Activated CD4-positive, alpha-beta memory T cell treated with anti-CD3 and anti-CD28 coated beads, Interleukin-2, amount 10 ng/mL, durations not matched to agents 7 days and 5 days (primary cell): ENCODE measurements at regions of chr3 and their contacts with region 1.

Region 1: GRCh38 chr3:66971891-66972551 is 26.1 kb upstream of the KBTBD8 start:
- DNase-seq: peak; percentile 68
- H3K4me3 Mint-ChIP-seq: peak overlapping the region; percentile 64
- H3K27ac Mint-ChIP-seq: peak overlapping the region; percentile 27
- H3K4me1 Mint-ChIP-seq: peaks cover 18% of the 10 kb centered on the region
- H3K27me3 Mint-ChIP-seq: peaks cover 2% of the 10 kb centered on the region

Region 2: DNA sequence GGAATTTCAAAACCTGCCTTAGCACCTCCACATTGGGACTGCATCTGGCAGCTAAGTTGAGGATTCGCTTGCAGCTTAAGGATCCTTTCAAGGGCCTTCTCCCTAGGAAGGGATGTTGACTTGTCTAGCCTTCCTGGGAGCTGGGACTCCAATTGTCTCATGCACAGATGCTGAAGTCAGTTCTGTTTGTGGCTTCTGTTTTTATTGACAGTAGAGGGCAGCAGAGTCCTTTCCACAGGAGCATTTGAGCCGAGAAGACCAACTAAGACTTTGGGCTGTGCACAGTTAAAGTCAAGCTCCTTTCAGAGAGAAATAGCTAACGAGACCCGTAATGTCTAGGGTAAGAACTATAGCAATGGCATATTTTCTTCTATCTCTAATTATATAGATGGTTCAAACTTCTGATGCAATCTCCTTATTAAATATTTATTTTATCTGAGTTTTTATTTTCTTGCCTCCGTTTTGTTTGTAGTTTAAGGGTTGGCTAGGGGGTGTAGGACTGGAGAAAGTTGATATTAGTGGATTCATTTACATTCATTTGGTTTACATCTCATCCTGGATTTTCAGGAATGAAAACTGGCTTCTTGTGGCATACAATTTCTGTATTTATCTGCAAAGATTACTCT is 33.6 kb before region 1 on chr3:
- CTCF ChIA-PET with region 1: interaction called, 14 read pairs
- POLR2A ChIA-PET with region 1: no interaction called
- DNase-seq: peak; percentile 26
- H3K4me3 Mint-ChIP-seq: no peak overlapping the region
- H3K27ac Mint-ChIP-seq: no peak overlapping the region
- H3K4me1 Mint-ChIP-seq: no peaks in the 10 kb centered on the region
- H3K27me3 Mint-ChIP-seq: peaks cover 10% of the 10 kb centered on the region

Region 3: DNA sequence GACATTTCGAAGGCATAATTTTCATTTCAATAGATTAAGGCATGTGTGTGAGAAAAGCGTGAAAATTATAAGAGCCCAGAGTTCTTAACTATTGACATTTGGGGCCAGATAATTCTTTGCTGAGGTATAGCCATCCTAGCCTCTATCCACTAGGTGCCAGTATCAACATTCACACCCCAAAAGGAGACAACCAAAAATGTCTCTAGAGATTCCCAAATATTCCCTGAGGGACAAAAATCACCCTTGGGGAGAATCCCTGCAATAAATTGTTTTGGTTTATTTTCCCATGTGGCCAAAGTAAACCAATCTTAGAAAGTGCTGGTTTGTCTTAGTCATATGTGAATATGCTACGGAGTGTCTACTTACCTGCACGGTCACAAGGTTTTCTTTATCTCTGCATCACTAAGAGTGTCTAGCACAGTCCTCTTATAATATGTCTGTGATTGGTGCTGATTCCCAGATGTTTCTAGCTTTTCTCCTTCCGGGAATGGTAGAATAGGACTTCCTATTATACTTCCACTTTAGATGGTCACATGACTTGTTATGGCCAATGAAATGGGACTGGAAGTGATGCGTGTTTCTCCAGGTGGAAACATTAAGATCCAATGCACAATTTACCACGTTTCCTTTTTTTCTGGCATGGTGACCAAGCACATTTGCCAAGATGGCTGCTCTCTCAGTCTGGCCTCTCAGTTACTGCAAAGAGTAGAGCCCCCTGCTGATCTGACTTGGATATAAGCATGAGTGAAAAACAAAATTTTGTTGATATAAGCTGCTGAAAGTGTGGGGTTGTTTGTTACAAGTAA is 18.0 kb after region 1 on chr3:
- CTCF ChIA-PET with region 1: interaction called, 52 read pairs
- POLR2A ChIA-PET with region 1: interaction called, 3 read pairs
- DNase-seq: no peak
- H3K4me3 Mint-ChIP-seq: no peak overlapping the region
- H3K27ac Mint-ChIP-seq: no peak overlapping the region
- H3K4me1 Mint-ChIP-seq: no peaks in the 10 kb centered on the region
- H3K27me3 Mint-ChIP-seq: peaks cover 16% of the 10 kb centered on the region

Region 4: DNA sequence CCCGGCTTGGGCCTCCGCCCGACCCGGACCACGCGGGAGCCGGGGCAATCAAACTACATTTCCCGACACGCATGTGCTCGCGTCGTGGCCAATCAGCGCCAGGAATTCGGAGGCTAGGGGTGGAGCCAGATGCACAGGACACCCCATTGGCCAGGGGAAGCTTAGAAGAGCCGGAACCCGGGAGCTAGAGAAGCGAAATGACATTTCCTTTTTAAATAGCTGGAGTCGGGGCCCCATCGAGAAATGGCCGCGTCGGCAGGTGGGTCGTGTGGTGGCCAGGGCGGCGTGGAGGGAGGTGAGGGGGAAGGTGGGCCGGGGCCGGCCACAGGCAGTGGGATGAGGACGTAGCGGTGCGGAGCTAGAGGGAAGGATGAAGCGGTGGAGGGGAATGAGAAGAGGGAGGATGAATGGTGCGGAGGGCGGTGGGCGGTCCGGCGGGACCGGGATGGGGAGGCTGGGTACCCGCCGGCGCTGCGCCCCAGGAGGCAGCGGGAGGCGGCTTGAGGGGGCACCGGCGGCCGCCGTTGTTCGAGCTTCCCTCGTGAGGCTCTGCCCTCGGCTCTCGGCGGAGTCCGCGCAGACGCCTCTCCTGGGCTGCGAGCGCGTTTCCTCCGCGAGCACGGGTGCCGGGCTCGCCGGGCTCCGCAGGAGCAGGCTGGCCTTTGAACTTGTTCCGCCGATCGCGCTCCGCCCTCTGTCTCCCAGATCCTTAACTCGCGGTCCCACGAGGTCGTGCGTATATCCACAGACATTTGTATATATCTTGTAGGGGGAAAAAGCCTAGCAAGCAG is 26.3 kb after region 1 on chr3 and contains the start of gene KBTBD8:
- CTCF ChIA-PET with region 1: interaction called, 47 read pairs
- POLR2A ChIA-PET with region 1: interaction called, 23 read pairs
- DNase-seq: peak; percentile 98
- H3K4me3 Mint-ChIP-seq: peak within 1 kb of the TSS; percentile 85
- H3K27ac Mint-ChIP-seq: peak within 1 kb of the TSS; percentile 88
- H3K4me1 Mint-ChIP-seq: peaks cover 42% of the 10 kb centered on the region
- H3K27me3 Mint-ChIP-seq: peaks cover 20% of the 10 kb centered on the region
- total RNA-seq, gene KBTBD8: 14.8 to 16.0 TPM

Region 5: GRCh38 chr3:67045711-67046465 is 73.9 kb after region 1 on chr3:
- CTCF ChIA-PET with region 1: interaction called, 12 read pairs
- POLR2A ChIA-PET with region 1: no interaction called
- DNase-seq: no peak
- H3K4me3 Mint-ChIP-seq: no peak overlapping the region
- H3K27ac Mint-ChIP-seq: no peak overlapping the region
- H3K4me1 Mint-ChIP-seq: no peaks in the 10 kb centered on the region
- H3K27me3 Mint-ChIP-seq: no peaks in the 10 kb centered on the region

Region 6: DNA sequence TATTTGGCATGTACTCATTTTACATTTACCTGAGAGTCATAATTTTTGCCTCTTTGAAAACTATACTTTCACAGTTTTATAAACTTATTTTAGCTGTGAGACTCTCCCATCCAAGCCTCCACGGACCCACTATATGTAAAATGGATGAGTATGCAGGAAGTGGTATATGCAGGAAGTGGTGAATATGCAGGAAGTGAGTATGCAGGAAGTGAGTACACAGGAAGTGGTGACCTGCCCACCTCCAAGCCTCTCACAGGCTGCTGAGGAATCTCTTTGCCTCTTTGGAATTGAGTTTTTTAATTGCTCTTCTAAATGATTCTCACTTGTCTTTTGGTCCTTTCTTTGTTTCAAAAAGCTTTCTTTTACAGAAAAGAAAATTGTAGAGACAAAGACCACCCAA is 111.3 kb after region 1 on chr3:
- CTCF ChIA-PET with region 1: interaction called, 11 read pairs
- POLR2A ChIA-PET with region 1: interaction called, 3 read pairs
- DNase-seq: peak; percentile 70
- H3K4me3 Mint-ChIP-seq: no peak overlapping the region
- H3K27ac Mint-ChIP-seq: peak overlapping the region; percentile 81
- H3K4me1 Mint-ChIP-seq: peaks cover 23% of the 10 kb centered on the region
- H3K27me3 Mint-ChIP-seq: peaks cover 5% of the 10 kb centered on the region

Region 7: GRCh38 chr3:67113802-67114407 is 141.9 kb after region 1 on chr3:
- CTCF ChIA-PET with region 1: interaction called, 48 read pairs
- POLR2A ChIA-PET with region 1: no interaction called
- DNase-seq: peak; percentile 86
- H3K4me3 Mint-ChIP-seq: no peak overlapping the region
- H3K27ac Mint-ChIP-seq: no peak overlapping the region
- H3K4me1 Mint-ChIP-seq: no peaks in the 10 kb centered on the region
- H3K27me3 Mint-ChIP-seq: peaks cover 4% of the 10 kb centered on the region

Region 8: DNA sequence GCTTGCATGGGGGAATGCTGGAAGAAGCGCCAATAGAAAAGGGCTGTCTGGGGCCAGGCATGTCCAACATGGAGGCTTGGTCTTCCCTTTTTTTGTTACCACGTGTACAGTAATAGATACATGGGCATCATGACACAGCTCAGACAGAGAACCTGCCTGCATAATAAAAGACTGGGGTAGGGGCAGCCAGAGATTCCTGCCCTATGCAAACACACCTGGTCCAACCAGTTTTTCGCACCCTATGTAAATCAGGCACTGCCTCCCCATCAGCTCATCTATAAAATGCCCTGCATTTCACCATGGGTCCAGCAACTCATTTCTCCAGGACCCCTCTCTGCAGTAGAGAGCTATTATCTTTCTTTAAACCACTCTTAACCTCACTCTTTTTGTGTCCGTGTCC is 291.8 kb after region 1 on chr3:
- CTCF ChIA-PET with region 1: no interaction called
- POLR2A ChIA-PET with region 1: no interaction called
- DNase-seq: no peak
- H3K4me3 Mint-ChIP-seq: no peak overlapping the region
- H3K27ac Mint-ChIP-seq: no peak overlapping the region
- H3K4me1 Mint-ChIP-seq: no peaks in the 10 kb centered on the region
- H3K27me3 Mint-ChIP-seq: no peaks in the 10 kb centered on the region